Activated naive CD4-positive, alpha-beta T cell treated with anti-CD3 and anti-CD28 coated beads for 36 hours (primary cell): ENCODE measurements at regions of chr22 and their contacts with region 1.

Region 1: GRCh38 chr22:28817919-28818909 is 17.8 kb upstream of the XBP1 start:
- DNase-seq: peak; percentile 54
- H3K4me3 Mint-ChIP-seq: no peak overlapping the region
- H3K27ac Mint-ChIP-seq: peak overlapping the region; percentile 30
- H3K4me1 Mint-ChIP-seq: peaks cover 71% of the 10 kb centered on the region
- H3K27me3 Mint-ChIP-seq: no peaks in the 10 kb centered on the region

Region 2: GRCh38 chr22:28674121-28674563 is 144.1 kb before region 1 on chr22:
- CTCF ChIA-PET with region 1: no interaction called
- intact Hi-C with region 1: loop called (anchors 10 kb)
- DNase-seq: peak; percentile 27
- H3K4me3 Mint-ChIP-seq: peak overlapping the region; percentile 55
- H3K27ac Mint-ChIP-seq: peak overlapping the region; percentile 87
- H3K4me1 Mint-ChIP-seq: peaks cover 28% of the 10 kb centered on the region
- H3K27me3 Mint-ChIP-seq: peaks cover 64% of the 10 kb centered on the region